Activated naive CD4-positive, alpha-beta T cell treated with anti-CD3 and anti-CD28 coated beads for 36 hours (primary cell): ENCODE measurements at regions of chr2 and their contacts with region 1.

Region 1: GRCh38 chr2:138827426-138828054 is 47.4 kb upstream of the NXPH2 start:
- DNase-seq: peak; percentile 30
- H3K4me3 Mint-ChIP-seq: no peak overlapping the region
- H3K27ac Mint-ChIP-seq: no peak overlapping the region
- H3K4me1 Mint-ChIP-seq: no peaks in the 10 kb centered on the region
- H3K27me3 Mint-ChIP-seq: peaks cover 6% of the 10 kb centered on the region

Region 2: DNA sequence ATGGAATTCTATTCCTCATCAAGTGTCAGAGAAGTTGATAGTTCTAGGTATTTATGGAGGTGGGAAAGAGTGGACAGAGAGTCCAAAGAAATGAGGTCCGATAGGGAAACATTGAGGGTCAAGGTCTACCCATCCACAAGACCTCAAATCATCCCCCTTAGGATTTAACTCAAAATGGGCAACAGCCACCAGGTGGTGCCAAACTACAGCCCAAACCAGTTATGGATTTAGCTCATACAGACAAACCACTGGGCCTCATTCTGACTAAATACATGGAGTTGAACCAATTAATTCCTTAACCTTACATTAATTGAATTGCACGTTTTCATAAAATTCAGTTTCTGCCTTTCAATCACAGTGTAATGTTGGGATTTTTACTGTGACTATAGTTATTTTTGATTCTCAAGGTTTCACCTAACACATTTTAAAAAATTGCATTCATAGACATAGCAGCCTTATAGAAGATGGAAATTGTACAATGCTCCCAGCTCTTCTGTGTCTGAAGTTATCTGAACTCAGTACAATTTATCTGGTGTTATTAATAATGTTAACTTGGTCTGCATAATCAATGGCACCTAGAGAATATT is 961.5 kb before region 1 on chr2:
- CTCF ChIA-PET with region 1: interaction called, 8 read pairs
- intact Hi-C with region 1: loop called (anchors 1 kb)
- DNase-seq: peak; percentile 76
- H3K4me3 Mint-ChIP-seq: no peak overlapping the region
- H3K27ac Mint-ChIP-seq: no peak overlapping the region
- H3K4me1 Mint-ChIP-seq: no peaks in the 10 kb centered on the region
- H3K27me3 Mint-ChIP-seq: peaks cover 7% of the 10 kb centered on the region

Region 3: DNA sequence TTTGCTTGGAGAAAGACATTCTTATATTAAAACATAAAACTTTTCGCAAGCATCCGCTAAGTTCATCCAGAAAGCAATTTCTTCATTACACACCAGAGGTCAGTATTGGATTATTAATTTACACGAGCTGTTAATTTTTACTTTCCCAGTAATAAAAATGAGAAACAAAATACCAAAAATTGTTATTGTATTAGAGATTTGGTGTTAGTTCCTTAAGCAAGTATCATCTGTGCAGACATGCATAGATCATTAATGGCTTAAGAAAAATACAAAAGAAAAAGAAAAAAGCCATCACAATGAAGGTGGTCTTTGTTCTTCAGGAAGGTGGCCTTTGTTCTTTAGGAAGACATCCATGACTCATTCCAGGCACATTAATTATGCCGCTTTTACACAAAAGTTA is 916.9 kb before region 1 on chr2:
- CTCF ChIA-PET with region 1: no interaction called
- intact Hi-C with region 1: loop called (anchors 1 kb)
- DNase-seq: no peak
- H3K4me3 Mint-ChIP-seq: no peak overlapping the region
- H3K27ac Mint-ChIP-seq: no peak overlapping the region
- H3K4me1 Mint-ChIP-seq: no peaks in the 10 kb centered on the region
- H3K27me3 Mint-ChIP-seq: peaks cover 11% of the 10 kb centered on the region

Region 4: DNA sequence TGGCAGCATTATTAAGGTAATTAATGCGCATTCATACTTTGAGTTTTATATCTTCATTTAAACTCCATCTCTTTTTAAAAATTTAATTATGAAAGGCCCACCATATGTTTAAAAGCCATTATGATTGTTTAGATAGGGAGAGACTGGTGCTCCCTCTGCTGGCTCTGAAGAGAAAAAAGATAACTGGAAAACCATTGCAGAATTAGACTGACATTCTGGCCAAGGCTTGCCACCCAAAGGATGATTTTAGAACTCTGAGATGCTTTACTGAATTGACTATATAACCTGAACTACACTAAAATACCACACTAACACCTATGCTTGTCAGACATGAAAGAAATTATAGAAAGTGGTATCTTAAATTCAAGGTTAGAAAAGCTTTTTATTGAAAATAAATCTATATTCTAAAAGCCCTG is 453.5 kb before region 1 on chr2:
- CTCF ChIA-PET with region 1: interaction called, 4 read pairs
- intact Hi-C with region 1: loop called (anchors 5 kb)
- DNase-seq: no peak
- H3K4me3 Mint-ChIP-seq: no peak overlapping the region
- H3K27ac Mint-ChIP-seq: no peak overlapping the region
- H3K4me1 Mint-ChIP-seq: no peaks in the 10 kb centered on the region
- H3K27me3 Mint-ChIP-seq: peaks cover 5% of the 10 kb centered on the region

Region 5: GRCh38 chr2:138476940-138477339 is 350.6 kb before region 1 on chr2:
- CTCF ChIA-PET with region 1: interaction called, 3 read pairs
- intact Hi-C with region 1: loop called (anchors 1 kb)
- DNase-seq: no peak
- H3K4me3 Mint-ChIP-seq: no peak overlapping the region
- H3K27ac Mint-ChIP-seq: no peak overlapping the region
- H3K4me1 Mint-ChIP-seq: no peaks in the 10 kb centered on the region
- H3K27me3 Mint-ChIP-seq: peaks cover 8% of the 10 kb centered on the region